ENCODE measurements at regions of chr14 and their contacts with region 1.

Region 1: GRCh38 chr14:91350813-91351511 is 66.7 kb downstream of the CCDC88C start:
- DNase-seq: peak; percentile 81
- ATAC-seq: peak; percentile 59
- H3K4me3 Mint-ChIP-seq: peak overlapping the region; percentile 65
- H3K27ac Mint-ChIP-seq: peak overlapping the region; percentile 92
- H3K4me1 Mint-ChIP-seq: peaks cover 95% of the 10 kb centered on the region
- H3K27me3 Mint-ChIP-seq: no peaks in the 10 kb centered on the region

Region 2: GRCh38 chr14:91185721-91186120 is 165.2 kb before region 1 on chr14:
- CTCF ChIA-PET with region 1: no interaction called
- POLR2A ChIA-PET with region 1: no interaction called
- intact Hi-C with region 1: no loop called
- DNase-seq: no peak
- ATAC-seq: no peak
- H3K4me3 Mint-ChIP-seq: no peak overlapping the region
- H3K27ac Mint-ChIP-seq: no peak overlapping the region
- H3K4me1 Mint-ChIP-seq: no peaks in the 10 kb centered on the region
- H3K27me3 Mint-ChIP-seq: no peaks in the 10 kb centered on the region

Region 3: GRCh38 chr14:91228112-91229004 is 122.6 kb before region 1 on chr14:
- CTCF ChIA-PET with region 1: no interaction called
- POLR2A ChIA-PET with region 1: no interaction called
- intact Hi-C with region 1: loop called in 1 of 2 experiments (anchors 1 kb)
- DNase-seq: peak; percentile 95
- ATAC-seq: peak; percentile 87
- H3K4me3 Mint-ChIP-seq: peak overlapping the region; percentile 67
- H3K27ac Mint-ChIP-seq: peak overlapping the region; percentile 100
- H3K4me1 Mint-ChIP-seq: peaks cover 95% of the 10 kb centered on the region
- H3K27me3 Mint-ChIP-seq: no peaks in the 10 kb centered on the region

Region 4: GRCh38 chr14:91323671-91324605 is 27.0 kb before region 1 on chr14:
- CTCF ChIA-PET with region 1: interaction called, 29 read pairs
- POLR2A ChIA-PET with region 1: interaction called, 13 read pairs
- intact Hi-C with region 1: loop called (anchors 1 kb)
- DNase-seq: peak; percentile 98
- ATAC-seq: peak; percentile 85
- H3K4me3 Mint-ChIP-seq: peak overlapping the region; percentile 74
- H3K27ac Mint-ChIP-seq: peak overlapping the region; percentile 100
- H3K4me1 Mint-ChIP-seq: peaks cover 83% of the 10 kb centered on the region
- H3K27me3 Mint-ChIP-seq: no peaks in the 10 kb centered on the region

Region 5: DNA sequence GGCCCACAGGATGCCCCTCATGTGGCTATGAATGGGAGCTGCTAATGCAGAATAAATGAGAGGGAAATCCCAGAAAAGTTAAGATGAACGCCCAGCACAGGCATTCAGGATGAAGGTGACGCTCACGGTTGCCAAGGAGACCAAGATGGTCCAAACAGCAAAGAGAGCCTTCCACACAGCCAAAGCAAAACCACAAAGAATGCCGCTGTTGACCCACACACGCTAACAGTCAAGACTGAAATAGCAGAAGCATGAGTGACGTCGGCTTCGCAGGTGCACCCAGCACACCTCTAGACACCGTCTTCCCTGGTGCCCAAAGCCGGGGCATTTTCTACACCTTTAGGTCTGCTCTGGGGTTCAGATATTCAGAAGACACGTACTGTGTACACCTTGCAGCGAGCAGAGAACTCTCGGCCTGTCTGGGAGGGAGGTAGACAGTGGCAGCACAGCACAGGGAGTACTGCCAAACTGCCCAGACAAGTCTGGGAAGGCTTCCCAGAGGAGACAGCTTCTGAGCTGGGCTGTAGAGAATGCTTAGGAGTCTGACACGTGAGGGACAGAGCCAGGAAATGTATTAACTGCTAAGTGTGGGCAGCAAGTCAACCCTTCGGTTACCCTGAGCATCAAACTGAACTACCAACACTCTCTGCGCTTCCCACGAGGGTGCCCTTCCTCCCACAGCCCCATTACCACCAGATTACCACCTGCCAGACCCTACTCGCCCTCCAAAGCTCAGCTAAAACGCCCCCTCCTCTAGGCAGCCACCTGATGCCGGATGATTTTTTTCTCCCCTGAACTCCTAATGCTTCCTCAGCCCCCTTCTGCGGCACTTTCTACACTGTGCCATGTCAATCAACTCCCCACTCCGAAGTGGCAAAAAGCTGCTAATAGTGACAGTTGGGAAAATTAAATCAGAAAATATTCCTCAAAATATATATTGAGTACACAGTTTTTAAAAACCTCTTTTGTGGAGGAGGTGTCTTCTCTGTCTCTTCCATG is 16.5 kb after region 1 on chr14:
- CTCF ChIA-PET with region 1: interaction called, 24 read pairs
- POLR2A ChIA-PET with region 1: interaction called, 9 read pairs
- intact Hi-C with region 1: loop called in 1 of 2 experiments (anchors 1 kb)
- DNase-seq: peak; percentile 75
- ATAC-seq: peak; percentile 49
- H3K4me3 Mint-ChIP-seq: peak overlapping the region; percentile 43
- H3K27ac Mint-ChIP-seq: peak overlapping the region; percentile 61
- H3K4me1 Mint-ChIP-seq: peaks cover 87% of the 10 kb centered on the region
- H3K27me3 Mint-ChIP-seq: no peaks in the 10 kb centered on the region

Region 6: DNA sequence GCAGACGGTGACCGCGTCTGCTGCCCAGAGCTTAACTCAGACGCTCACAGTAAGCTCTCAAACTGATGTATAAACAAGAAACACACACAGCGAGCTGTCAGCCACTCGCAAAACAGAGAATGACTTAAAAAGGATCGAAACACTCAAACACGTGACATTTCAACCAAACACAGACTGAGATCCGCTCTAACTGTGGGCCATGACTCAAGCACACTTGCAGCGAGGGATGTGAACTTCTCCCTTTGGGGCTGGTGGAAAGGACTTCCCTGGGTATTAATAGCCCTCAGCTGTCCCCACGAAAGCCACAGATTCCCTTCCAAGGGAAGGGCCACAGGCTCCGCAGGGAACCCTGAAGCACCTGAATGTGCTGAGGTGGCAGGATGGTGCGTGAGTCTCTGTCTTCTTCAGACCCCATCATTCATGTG is 37.6 kb after region 1 on chr14:
- CTCF ChIA-PET with region 1: interaction called, 5 read pairs
- POLR2A ChIA-PET with region 1: interaction called, 7 read pairs
- intact Hi-C with region 1: loop called in 1 of 2 experiments (anchors 2 kb)
- DNase-seq: peak; percentile 73
- ATAC-seq: peak; percentile 88
- H3K4me3 Mint-ChIP-seq: peak overlapping the region; percentile 26
- H3K27ac Mint-ChIP-seq: peak overlapping the region; percentile 85
- H3K4me1 Mint-ChIP-seq: peaks cover 89% of the 10 kb centered on the region
- H3K27me3 Mint-ChIP-seq: no peaks in the 10 kb centered on the region

Region 7: GRCh38 chr14:91410771-91411536 is 60.0 kb after region 1 on chr14:
- CTCF ChIA-PET with region 1: interaction called, 28 read pairs
- POLR2A ChIA-PET with region 1: interaction called, 18 read pairs
- intact Hi-C with region 1: loop called (anchors 1 kb)
- DNase-seq: peak; percentile 44
- ATAC-seq: peak; percentile 60
- H3K4me3 Mint-ChIP-seq: peak overlapping the region; percentile 57
- H3K27ac Mint-ChIP-seq: peak overlapping the region; percentile 86
- H3K4me1 Mint-ChIP-seq: peaks cover 90% of the 10 kb centered on the region
- H3K27me3 Mint-ChIP-seq: no peaks in the 10 kb centered on the region

Measured in activated CD4-positive, alpha-beta T cell treated with anti-CD3 and anti-CD28 coated beads for 36 hours (primary cell).